ENCODE measurements at regions of chr10 and their contacts with region 1.

Region 1: DNA sequence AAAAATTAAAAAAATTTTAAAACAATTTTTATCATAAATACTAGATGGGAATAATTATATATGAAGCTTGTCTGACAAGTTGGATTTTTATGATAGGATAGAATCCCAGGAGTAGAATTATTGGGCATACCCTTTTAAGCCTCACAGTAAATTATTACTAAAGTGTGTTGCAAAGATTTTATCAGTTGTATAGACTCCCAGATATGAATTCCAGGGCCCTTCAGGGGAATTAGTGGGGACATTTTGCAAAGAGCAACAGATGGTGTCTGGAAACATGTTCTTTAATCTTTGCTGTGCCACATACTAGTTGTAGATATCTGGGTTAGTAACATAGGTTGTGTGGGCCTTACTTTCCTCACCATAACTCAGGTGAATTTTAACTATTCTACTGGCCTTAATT is 28.7 kb downstream of the ZEB1 start:
- DNase-seq: no peak
- ATAC-seq: no peak
- H3K4me3 Mint-ChIP-seq: no peak overlapping the region
- H3K27ac Mint-ChIP-seq: peak overlapping the region; percentile 13
- H3K4me1 Mint-ChIP-seq: peaks cover 63% of the 10 kb centered on the region
- H3K27me3 Mint-ChIP-seq: no peaks in the 10 kb centered on the region

Region 2: GRCh38 chr10:31204090-31204489 is 143.6 kb before region 1 on chr10:
- CTCF ChIA-PET with region 1: no interaction called
- POLR2A ChIA-PET with region 1: no interaction called
- intact Hi-C with region 1: no loop called
- DNase-seq: no peak
- ATAC-seq: no peak
- H3K4me3 Mint-ChIP-seq: no peak overlapping the region
- H3K27ac Mint-ChIP-seq: no peak overlapping the region
- H3K4me1 Mint-ChIP-seq: no peaks in the 10 kb centered on the region
- H3K27me3 Mint-ChIP-seq: no peaks in the 10 kb centered on the region

Region 3: GRCh38 chr10:31399631-31400030 is 51.9 kb after region 1 on chr10:
- CTCF ChIA-PET with region 1: no interaction called
- POLR2A ChIA-PET with region 1: no interaction called
- intact Hi-C with region 1: no loop called
- DNase-seq: no peak
- ATAC-seq: no peak
- H3K4me3 Mint-ChIP-seq: no peak overlapping the region
- H3K27ac Mint-ChIP-seq: no peak overlapping the region
- H3K4me1 Mint-ChIP-seq: peaks cover 48% of the 10 kb centered on the region
- H3K27me3 Mint-ChIP-seq: no peaks in the 10 kb centered on the region

Region 4: DNA sequence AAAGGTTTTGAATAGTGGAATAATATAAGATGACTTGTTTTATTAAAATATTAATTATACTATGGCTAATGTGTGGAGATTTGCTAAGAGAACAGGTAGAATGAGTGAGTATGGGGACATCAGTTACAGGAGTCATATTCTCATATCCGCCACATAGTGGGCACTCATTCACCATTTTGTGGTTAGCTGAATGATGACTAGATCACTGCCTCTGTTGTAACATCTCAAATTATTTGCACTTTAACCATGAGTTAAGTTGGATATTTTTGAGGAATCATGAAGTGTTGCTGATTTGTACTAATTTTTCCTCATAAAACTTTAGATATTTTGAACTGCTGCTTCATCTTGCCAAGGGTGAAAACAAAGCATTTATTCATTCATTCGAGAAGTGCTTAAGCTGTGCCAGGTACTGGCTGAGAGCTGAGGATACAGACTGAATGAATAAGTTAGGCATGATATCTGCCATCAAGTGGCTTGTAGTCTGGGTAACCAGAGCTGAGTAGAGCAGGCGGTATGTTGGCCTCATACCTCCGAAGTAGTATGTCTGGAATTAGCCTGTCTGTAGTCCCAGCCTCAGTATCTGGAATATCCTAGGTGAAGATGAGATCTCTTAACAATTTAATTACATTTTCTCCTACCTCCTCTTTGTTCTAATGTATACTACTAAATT is 71.8 kb after region 1 on chr10:
- CTCF ChIA-PET with region 1: no interaction called
- POLR2A ChIA-PET with region 1: no interaction called
- intact Hi-C with region 1: no loop called
- DNase-seq: peak; percentile 20
- ATAC-seq: peak; percentile 58
- H3K4me3 Mint-ChIP-seq: no peak overlapping the region
- H3K27ac Mint-ChIP-seq: no peak overlapping the region
- H3K4me1 Mint-ChIP-seq: peaks cover 43% of the 10 kb centered on the region
- H3K27me3 Mint-ChIP-seq: no peaks in the 10 kb centered on the region

Region 5: DNA sequence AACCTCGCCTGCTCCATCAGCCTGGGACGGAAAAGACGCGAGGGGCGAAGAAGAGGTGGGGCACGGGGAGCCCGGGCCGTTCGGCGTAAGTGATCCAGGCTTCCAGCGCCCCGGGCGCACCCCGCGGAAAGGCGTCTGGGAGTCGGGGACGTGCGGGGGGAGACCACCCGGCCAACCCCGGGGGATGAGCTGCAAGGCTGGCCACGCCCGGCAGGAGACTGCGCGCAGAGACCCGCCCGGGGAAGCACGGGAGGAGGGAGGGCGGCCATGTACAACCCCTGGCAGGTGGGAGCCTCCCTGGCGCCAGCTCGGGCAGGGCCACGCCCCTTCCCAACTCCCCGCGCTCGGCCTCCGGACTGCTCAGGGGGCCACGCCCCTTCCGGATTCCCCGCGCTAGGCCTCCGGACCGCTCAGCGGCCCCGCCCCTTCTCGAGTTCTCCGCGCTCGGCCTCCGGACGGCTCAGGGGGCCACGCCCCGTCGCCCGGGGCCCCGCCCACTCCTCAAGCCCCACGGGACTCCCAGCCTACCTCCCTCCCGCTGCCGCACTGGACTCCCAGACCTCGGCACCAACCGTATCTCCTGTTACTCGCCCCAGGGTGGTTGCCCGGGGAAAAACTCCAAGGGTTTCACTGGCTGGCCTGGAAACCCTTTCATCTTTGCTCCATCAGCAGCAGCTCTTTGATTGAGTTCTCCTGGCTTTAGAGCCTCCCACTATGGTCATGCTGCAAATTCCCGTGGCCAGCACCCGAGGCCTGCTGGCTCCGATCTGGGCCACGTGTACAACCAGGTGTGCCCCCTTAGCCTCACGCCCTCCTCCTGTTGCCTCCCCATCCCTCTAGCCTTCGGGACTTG is 255.8 kb after region 1 on chr10:
- CTCF ChIA-PET with region 1: no interaction called
- POLR2A ChIA-PET with region 1: no interaction called
- intact Hi-C with region 1: loop called (anchors 2 to 10 kb)
- DNase-seq: peak; percentile 94
- ATAC-seq: peak; percentile 92
- H3K4me3 Mint-ChIP-seq: peak overlapping the region; percentile 76
- H3K27ac Mint-ChIP-seq: peak overlapping the region; percentile 17
- H3K4me1 Mint-ChIP-seq: peaks cover 33% of the 10 kb centered on the region
- H3K27me3 Mint-ChIP-seq: peaks cover 2% of the 10 kb centered on the region

Measured in activated CD4-positive, alpha-beta T cell treated with anti-CD3 and anti-CD28 coated beads for 36 hours (primary cell).